ENCODE measurements at regions of chr19 and their contacts with region 1.

Region 1: DNA sequence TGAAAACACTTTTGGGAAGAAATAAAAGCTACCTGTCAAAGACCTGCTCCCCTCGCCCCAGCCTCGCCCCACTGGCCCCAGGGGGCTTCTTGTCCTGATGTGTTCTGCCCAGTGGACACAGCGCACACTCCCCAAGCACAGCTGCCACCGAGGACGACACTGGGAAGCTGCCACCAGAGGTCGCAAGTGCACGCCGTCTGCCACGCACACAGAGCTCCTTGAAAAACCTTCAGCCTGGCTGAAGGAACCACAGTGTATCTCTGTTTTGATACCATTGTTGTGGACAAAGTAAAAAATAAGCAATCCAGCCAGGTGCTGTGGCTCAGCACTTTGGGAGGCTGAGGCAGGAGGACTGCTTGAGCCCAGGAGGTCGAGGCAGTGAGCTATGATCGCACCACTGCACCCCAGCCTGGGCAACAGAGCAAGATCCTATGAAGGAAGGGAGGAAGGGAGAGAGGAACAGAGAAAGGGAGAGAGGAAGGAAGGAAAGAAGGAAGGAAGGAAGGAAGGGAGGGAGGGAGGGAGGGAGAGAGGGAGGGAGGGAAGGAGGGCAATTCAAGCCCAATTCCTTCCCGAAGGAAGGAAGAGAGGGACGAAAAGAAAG is 57.3 kb downstream of the CEBPG start:
- DNase-seq: peak; percentile 72 to 82
- H3K4me3 ChIP-seq: no peak overlapping the region
- H3K4me3 Mint-ChIP-seq: no peak overlapping the region
- H3K27ac Mint-ChIP-seq: no peak overlapping the region
- H3K4me1 ChIP-seq: no peaks in the 10 kb centered on the region
- H3K4me1 Mint-ChIP-seq: no peaks in the 10 kb centered on the region
- H3K27me3 ChIP-seq: no peaks in the 10 kb centered on the region
- H3K27me3 Mint-ChIP-seq: no peaks in the 10 kb centered on the region
- CTCF ChIP-seq: peak; percentile 80 to 96

Region 2: DNA sequence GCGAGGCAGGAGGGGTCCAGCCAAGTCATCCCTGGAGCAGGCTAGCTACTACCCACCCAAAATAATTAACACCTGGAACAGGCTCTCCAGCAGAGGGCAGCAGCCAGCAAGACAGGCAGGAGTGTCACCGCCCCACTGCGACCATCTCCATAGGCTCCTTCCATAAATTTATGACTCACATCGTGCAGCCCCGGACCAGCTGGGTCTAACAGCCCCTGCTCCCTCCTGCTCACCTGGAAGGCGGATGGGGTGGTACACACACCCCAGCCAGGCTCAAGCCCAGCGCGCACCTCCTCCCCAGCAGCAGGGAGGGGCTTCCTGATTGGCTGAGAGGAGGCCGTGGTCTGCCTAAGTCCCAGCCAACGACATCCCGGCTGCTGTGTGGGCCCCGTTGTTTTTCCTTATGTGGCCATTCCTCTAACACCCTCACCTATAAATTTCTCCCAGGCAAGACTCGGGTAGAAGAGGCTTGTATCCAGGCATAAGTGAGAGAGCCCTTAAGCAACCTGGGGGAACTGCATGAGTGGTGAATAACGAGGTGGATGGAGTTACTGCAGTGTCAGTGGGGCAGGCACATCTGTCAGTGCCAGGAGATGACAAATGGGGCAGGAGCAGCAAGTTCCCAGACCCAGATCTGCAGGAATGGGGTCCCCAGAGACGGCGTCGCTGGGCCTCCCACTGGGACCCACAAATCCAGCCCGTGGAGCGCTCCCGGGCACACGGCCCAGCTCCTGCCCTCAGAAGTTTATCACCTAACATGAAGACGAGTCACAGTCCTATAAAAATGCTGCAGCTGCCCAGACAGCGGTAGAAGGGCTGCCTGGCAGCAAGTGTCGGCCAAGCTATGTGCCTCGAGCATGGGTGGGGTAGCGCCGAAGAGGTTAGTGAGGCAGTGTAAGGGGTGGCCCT is 14.2 kb before region 1 on chr19:
- CTCF ChIA-PET with region 1: interaction called, 13 read pairs
- POLR2A ChIA-PET with region 1: no interaction called
- intact Hi-C with region 1: no loop called
- DNase-seq: peak; percentile 86
- H3K4me3 ChIP-seq: no peak overlapping the region
- H3K4me3 Mint-ChIP-seq: no peak overlapping the region
- H3K27ac Mint-ChIP-seq: no peak overlapping the region
- H3K4me1 ChIP-seq: peaks cover 4% of the 10 kb centered on the region; the same call in 1 of the 2 replicates
- H3K4me1 Mint-ChIP-seq: peaks cover 5% of the 10 kb centered on the region
- H3K27me3 ChIP-seq: no peaks in the 10 kb centered on the region
- H3K27me3 Mint-ChIP-seq: no peaks in the 10 kb centered on the region
- CTCF ChIP-seq: peak; percentile 77 to 82

Region 3: DNA sequence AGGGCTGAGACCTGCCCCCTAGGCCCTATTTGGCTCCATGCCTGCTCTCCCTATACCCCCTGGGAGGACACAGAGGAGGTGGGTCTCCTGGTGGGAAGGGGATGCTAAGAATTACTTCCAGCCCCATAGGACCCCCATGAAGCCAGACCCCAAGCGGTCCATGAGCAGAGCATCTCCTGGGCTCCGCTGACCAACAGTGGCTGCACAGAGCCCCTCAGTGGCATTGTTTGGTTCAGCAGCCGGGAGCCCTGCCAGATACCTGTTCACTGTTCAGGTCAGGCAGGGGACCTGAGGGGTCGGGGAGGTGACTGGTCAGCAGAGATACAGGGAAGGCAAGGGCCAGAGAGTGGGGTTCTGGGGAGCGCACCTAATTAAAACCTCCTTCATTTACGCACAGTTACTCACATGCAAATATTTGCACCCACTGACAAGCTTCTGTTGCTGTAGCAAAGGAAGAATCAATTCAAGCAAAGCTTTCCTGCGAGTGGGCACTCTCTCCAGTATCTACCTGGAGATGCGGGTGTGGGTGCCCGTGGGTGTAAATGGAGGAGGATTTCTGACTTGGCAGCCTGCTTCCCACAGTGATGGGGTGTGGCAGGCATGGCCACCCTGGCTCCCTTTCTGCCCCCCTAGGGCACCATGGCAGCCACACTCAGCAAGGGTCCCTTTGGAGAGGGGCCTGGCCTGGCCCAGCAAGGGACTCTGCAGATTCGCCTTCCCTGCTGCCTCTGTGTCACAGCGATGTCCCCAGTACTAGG is 274.5 kb after region 1 on chr19:
- CTCF ChIA-PET with region 1: interaction called, 3 read pairs
- POLR2A ChIA-PET with region 1: no interaction called
- intact Hi-C with region 1: loop called (anchors 10 kb)
- DNase-seq: no peak
- H3K4me3 ChIP-seq: no peak overlapping the region
- H3K4me3 Mint-ChIP-seq: no peak overlapping the region
- H3K27ac Mint-ChIP-seq: no peak overlapping the region
- H3K4me1 ChIP-seq: no peaks in the 10 kb centered on the region
- H3K4me1 Mint-ChIP-seq: no peaks in the 10 kb centered on the region
- H3K27me3 ChIP-seq: no peaks in the 10 kb centered on the region; the same call in 1 of the 2 replicates
- H3K27me3 Mint-ChIP-seq: peaks cover 30% of the 10 kb centered on the region
- CTCF ChIP-seq: peak in 1 of 2 experiments; percentile 30

Measured in Caco-2 (cell line).